Activated naive CD4-positive, alpha-beta T cell treated with anti-CD3 and anti-CD28 coated beads for 36 hours (primary cell): ENCODE measurements at regions of chr10 and their contacts with region 1.

Region 1: DNA sequence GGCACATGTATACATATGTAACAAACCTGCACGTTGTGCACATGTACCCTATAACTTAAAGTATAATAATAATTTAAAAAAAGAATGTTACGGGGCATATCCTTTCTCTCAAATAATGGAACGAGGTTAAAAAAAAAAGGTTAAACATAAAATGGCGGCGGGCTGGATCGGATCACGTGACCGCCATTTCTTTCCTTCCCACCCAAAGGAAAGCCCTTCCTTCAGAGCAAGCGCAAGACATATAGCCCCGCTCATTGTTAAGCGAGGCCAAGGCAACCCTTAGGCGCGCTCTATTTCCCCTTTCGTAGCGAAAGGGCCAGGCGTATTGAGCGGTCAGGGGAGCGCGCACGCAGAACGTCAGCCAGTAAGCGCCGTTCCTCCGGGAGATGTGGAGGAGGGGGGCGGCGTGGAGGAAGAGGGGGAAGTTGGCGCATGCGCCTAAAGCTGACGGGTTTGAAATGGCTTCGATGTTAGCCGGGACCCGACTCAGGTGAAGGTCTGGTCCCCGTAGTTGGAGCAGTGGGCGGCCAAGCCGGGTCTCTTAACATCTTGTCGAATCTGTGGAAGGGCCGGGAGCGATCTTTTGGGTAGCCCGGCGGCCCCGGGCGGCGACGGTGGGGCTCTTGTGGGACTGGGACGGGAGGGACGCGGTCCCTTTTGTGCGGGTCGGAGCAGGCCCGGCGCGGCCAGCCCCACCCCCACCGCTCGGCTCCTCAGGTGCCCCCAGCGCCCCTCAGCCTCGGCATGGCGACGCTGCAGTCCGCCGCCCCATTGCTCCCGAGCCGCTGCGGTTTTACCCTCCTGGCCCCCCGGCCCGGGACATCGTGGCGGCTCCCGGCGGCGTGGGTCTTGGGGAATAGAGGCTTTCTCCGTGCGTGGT is at the start of gene CCAR1:
- DNase-seq: peak; percentile 98
- H3K4me3 Mint-ChIP-seq: peak within 1 kb of the TSS; percentile 96
- H3K27ac Mint-ChIP-seq: peak within 1 kb of the TSS; percentile 96
- H3K4me1 Mint-ChIP-seq: peaks cover 16% of the 10 kb centered on the region
- H3K27me3 Mint-ChIP-seq: no peaks in the 10 kb centered on the region
- total RNA-seq, gene CCAR1: 80.7 to 87.9 TPM

Region 2: GRCh38 chr10:68074775-68075549 is 646.1 kb before region 1 on chr10 and contains the start of gene HERC4:
- CTCF ChIA-PET with region 1: no interaction called
- intact Hi-C with region 1: loop called (anchors 5 kb)
- DNase-seq: peak; percentile 92
- H3K4me3 Mint-ChIP-seq: peak within 1 kb of the TSS; percentile 97
- H3K27ac Mint-ChIP-seq: peak within 1 kb of the TSS; percentile 91
- H3K4me1 Mint-ChIP-seq: peaks cover 33% of the 10 kb centered on the region
- H3K27me3 Mint-ChIP-seq: no peaks in the 10 kb centered on the region
- total RNA-seq, gene HERC4: 42.2 to 45.0 TPM

Region 3: GRCh38 chr10:68471586-68472408 is 249.2 kb before region 1 on chr10 and contains the start of gene DNA2:
- CTCF ChIA-PET with region 1: no interaction called
- intact Hi-C with region 1: loop called (anchors 1 kb)
- DNase-seq: peak; percentile 81
- H3K4me3 Mint-ChIP-seq: peak within 1 kb of the TSS; percentile 96
- H3K27ac Mint-ChIP-seq: peak within 1 kb of the TSS; percentile 90
- H3K4me1 Mint-ChIP-seq: peaks cover 20% of the 10 kb centered on the region
- H3K27me3 Mint-ChIP-seq: no peaks in the 10 kb centered on the region
- total RNA-seq, gene DNA2: 50.2 to 51.4 TPM

Region 4: DNA sequence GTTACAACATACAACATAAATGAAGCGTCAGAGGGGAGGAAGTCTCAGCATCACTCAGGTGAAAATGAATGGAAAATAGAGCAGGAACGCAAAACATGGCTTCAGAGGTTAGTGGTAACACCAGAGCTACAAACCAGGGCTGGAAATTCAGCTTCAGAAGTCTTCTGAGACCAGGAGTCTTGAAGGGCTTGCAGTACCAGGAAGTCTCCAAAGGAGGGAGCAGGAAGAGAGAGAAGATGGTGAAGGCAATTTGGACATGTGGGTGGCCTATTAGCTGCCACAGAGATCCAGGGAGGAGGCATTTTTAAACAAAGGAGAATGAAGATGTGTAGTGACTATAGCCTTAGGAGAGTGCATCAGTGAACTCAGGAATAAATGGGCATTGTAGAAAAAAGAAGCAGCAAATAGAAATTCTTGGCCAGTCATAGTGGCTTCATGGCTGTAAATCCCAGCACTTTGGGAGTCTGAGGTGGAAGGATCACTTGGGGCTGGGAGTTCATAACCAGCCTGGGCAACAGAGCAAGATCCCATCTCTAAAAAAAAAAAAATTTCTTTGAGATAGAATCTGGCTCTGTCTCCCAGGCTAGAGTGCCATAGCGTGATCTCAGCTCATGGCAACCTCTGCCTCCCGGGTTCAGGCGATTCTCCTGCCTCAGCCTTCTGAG is 170.2 kb before region 1 on chr10:
- CTCF ChIA-PET with region 1: interaction called, 7 read pairs
- intact Hi-C with region 1: loop called (anchors 1 kb)
- DNase-seq: peak; percentile 69
- H3K4me3 Mint-ChIP-seq: no peak overlapping the region
- H3K27ac Mint-ChIP-seq: no peak overlapping the region
- H3K4me1 Mint-ChIP-seq: no peaks in the 10 kb centered on the region
- H3K27me3 Mint-ChIP-seq: no peaks in the 10 kb centered on the region

Region 5: GRCh38 chr10:68826764-68827591 is 105.9 kb after region 1 on chr10 and contains the start of gene STOX1:
- CTCF ChIA-PET with region 1: interaction called, 4 read pairs
- intact Hi-C with region 1: loop called (anchors 5 kb)
- DNase-seq: peak; percentile 56
- H3K4me3 Mint-ChIP-seq: peak within 1 kb of the TSS; percentile 75
- H3K27ac Mint-ChIP-seq: no peak within 1 kb of the TSS
- H3K4me1 Mint-ChIP-seq: peaks cover 13% of the 10 kb centered on the region
- H3K27me3 Mint-ChIP-seq: peaks cover 2% of the 10 kb centered on the region
- total RNA-seq, gene STOX1: 0.38 to 0.42 TPM